Heart left ventricle (tissue), 16 donors: ENCODE measurements at regions of chr6 and their contacts with region 1.

Region 1: DNA sequence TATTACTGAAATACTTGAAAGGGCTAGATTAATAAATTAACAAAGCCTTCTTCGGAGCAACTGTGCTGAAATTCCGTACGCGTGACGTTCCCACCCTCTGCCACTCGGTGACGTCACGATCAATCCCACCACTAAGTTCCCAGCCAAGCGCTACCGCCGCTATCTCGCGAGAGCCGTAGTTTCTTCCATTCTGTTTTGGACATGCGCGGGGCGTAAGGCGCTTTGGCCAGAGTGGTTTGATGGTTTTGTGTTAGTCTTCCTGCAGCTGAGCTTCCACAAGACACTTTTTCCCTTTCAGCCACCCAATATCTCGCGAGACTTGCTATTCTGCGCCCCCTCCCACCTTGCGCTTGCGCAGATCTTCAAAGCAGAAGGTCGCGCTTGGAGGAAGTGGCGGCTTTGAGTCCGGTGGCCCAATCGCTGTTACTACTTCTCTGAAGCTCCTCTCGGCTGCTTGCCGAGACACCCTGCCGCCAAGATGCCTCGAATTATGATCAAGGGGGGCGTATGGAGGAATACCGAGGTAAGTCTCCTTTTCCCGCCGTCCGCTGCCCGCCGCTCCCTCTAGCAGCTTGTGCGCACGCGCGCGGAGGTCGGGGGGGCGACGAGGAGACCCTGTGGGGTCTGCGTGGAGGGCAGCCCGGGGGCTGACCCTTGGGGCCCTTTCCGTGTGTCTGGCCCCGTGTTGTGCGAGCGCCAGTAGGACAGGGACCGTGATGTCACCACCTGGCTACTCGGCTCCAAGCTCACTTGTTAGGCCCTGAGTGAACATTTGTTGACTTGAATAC is at the start of gene CDC5L:
- DNase-seq: peak; percentile 95 to 96 (median 96)
- ATAC-seq: peak; percentile 89 to 93 (median 91)
- H3K4me3 ChIP-seq: peak within 1 kb of the TSS; percentile 40 to 97 (median 88)
- H3K27ac ChIP-seq: peak within 1 kb of the TSS; percentile 81 to 99 (median 96)
- H3K4me1 ChIP-seq: peaks cover 5 to 35% (median 25%) of the 10 kb centered on the region in 12 donors
- H3K27me3 ChIP-seq: no peaks in the 10 kb centered on the region
- CTCF ChIP-seq: no peak
- POLR2A ChIP-seq: peak in 1 of 2 donors; percentile 76
- total RNA-seq, gene CDC5L: 17.3 to 24.8 (median 18.8) TPM

Region 2: DNA sequence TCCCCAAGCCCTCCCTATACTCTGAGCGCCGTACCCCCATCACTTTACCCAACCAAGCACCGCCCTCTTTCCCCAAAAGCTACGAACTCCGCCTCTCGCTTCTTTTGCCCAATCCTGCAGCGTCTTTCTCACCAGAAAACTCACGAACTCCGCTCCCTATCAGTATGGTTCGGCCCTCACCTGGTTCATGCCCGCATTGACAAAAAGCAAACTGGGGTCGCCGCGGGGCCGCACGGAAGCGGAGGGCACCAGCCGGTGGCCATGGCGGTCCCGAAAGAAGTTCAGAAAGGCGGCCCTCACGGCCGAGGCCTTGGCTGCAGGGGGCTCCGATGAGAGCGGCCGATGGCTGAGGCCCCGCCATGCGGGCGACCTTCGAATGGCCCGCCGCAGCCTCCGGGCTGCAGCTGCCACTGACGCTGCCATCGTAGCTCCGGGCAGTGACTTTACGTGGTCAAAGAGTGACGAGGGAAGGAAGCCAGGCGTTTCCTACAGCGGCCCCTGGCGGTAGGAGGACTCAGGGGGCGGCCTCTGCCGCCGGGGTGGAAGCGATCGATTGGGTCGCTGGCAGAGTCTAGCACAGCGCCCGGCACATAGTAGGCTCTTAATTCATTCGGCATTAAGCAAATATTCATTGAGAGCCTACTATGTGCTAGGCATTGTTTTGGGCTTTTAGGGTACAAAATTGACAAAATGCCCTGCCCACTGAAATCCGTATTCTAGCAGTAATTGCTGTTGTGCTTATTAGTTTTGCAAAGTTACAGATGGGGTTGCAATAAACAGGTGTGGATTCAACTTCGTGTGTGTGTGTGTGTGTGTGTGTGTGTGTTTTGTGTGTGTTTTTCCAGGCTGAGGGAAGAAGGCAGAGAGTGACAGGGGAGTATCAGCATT is 74.4 kb before region 1 on chr6 and contains the start of gene AARS2:
- intact Hi-C with region 1: loop called in 1 of 10 experiments (anchors 2 kb)
- DNase-seq: peak; percentile 87 to 94 (median 89)
- ATAC-seq: peak; percentile 80 to 93 (median 92)
- H3K4me3 ChIP-seq: peak within 1 kb of the TSS; percentile 60 to 100 (median 96)
- H3K27ac ChIP-seq: peak within 1 kb of the TSS; percentile 56 to 91 (median 80)
- H3K4me1 ChIP-seq: peaks cover 0 to 36% (median 10%) of the 10 kb centered on the region in 12 donors
- H3K27me3 ChIP-seq: peaks cover 0 to 5% (median 0%) of the 10 kb centered on the region in 9 donors
- CTCF ChIP-seq: peak; percentile 93 to 100 (median 98)
- POLR2A ChIP-seq: peak in 1 of 2 donors; percentile 58
- total RNA-seq, gene AARS2: 5.0 to 9.8 (median 7.6) TPM

Region 3: DNA sequence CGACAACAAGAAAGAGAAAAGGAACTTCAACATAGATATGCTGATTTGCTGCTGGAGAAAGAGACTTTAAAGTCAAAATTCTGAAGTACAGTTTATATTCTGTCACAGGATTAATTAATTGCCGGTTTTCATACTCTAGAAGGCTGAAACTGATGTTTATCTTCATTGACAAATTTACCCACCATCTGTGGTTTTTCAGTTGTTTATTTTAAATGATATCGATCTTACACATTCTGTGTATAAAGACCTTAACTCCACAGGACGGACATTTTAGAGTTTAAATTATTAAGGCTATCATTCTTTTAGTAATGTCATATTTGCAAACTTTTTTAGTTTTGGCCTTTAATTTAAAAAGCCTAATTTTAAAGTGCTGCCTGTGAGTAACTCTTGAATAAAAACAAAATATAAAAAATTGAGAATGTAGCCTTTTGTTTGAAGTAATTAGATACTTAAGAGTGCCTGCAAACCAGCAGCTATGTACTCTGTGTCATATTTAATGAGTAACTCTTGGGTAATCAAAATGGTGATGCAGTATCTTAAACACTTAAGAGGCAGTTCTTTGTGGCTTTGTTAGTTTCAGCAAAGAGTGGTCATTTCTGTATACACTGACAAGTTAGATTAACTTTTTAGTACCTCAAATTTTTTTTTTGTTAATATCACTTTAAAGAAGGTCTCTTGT is 59.2 kb after region 1 on chr6:
- intact Hi-C with region 1: no loop called
- DNase-seq: no peak
- ATAC-seq: no peak
- H3K4me3 ChIP-seq: no peak overlapping the region
- H3K27ac ChIP-seq: no peak overlapping the region
- H3K4me1 ChIP-seq: peaks cover 0 to 12% (median 3%) of the 10 kb centered on the region in 12 donors
- H3K27me3 ChIP-seq: no peaks in the 10 kb centered on the region
- CTCF ChIP-seq: no peak
- POLR2A ChIP-seq: no peak